Ascending aorta (tissue), 2 donors: ENCODE measurements at regions of chr12 and their contacts with region 1.

Region 1: GRCh38 chr12:14650789-14651188 is 45.6 kb downstream of the GUCY2C start:
- DNase-seq: no peak
- H3K4me3 ChIP-seq: no peak overlapping the region
- H3K27ac ChIP-seq: peak overlapping the region; percentile 37 to 48
- H3K4me1 ChIP-seq: peaks cover 2 to 6% of the 10 kb centered on the region in 2 donors
- H3K27me3 ChIP-seq: no peaks in the 10 kb centered on the region
- CTCF ChIP-seq: no peak

Region 2: GRCh38 chr12:14589169-14590004 is 61.4 kb before region 1 on chr12:
- intact Hi-C with region 1: no loop called
- DNase-seq: no peak
- H3K4me3 ChIP-seq: no peak overlapping the region
- H3K27ac ChIP-seq: no peak overlapping the region
- H3K4me1 ChIP-seq: no peaks in the 10 kb centered on the region
- H3K27me3 ChIP-seq: no peaks in the 10 kb centered on the region
- CTCF ChIP-seq: no peak

Region 3: GRCh38 chr12:14638066-14638465 is 12.7 kb before region 1 on chr12:
- intact Hi-C with region 1: loop called (anchors 2 kb)
- DNase-seq: no peak
- H3K4me3 ChIP-seq: no peak overlapping the region
- H3K27ac ChIP-seq: no peak overlapping the region
- H3K4me1 ChIP-seq: peaks cover 0 to 9% of the 10 kb centered on the region in 2 donors
- H3K27me3 ChIP-seq: no peaks in the 10 kb centered on the region
- CTCF ChIP-seq: no peak